ENCODE measurements at regions of chr12 and their contacts with region 1.

Region 1: DNA sequence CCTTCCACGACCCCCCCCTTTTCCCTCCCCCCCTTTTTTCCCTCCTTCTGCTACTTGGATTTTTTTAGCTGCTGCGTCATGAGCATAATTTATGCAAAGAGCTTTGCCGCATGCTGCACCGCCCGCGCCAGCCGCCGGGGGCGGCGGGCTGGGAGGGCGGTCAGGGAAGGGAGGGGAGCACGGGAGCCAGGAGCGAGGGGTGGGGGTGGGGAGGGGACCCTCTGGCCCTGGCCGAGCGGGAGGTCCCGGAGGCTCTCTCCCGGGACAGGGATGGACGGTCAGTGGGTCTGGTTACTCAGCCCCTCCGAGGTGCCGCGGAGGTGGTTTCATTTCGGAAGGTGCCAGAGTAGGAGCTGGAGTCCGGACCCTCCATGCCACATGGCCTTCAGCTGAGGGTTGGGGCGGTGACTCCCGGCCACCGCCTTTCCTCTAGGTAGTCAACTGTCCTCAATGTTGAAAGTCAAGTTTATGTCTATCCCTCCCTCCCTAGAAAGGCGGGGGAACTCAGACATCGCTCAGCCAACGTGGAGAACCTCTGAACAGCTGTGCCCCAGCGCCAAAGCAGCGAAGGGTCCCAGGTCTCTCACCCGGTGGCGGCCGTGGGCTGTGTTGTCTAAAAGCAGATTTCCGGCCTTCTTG is at the start of gene POU6F1:
- DNase-seq: peak; percentile 74 to 86 (median 79)
- ATAC-seq: peak; percentile 81 to 94 (median 92)
- H3K4me3 ChIP-seq: peak within 1 kb of the TSS; percentile 72 to 96 (median 84)
- H3K27ac ChIP-seq: peak within 1 kb of the TSS; percentile 85 to 99 (median 96)
- H3K4me1 ChIP-seq: peaks cover 0 to 27% (median 14%) of the 10 kb centered on the region in 12 donors
- H3K27me3 ChIP-seq: no peaks in the 10 kb centered on the region
- CTCF ChIP-seq: peak in 11 of 12 donors; percentile 36 to 68 (median 60)
- POLR2A ChIP-seq: peak in 1 of 2 donors; percentile 43
- total RNA-seq, gene POU6F1: 4.6 to 14.0 (median 6.8) TPM

Region 2: DNA sequence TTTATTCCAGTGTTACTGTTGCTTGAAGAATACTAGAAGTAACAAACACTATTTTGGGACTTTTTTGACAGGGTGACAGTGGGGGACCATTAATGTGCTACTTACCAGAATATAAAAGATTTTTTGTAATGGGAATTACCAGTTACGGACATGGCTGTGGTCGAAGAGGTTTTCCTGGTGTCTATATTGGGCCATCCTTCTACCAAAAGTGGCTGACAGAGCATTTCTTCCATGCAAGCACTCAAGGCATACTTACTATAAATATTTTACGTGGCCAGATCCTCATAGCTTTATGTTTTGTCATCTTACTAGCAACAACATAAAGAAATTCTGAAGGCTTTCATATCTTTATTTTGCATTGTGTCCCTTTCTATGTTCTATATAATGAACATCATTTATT is 330.9 kb before region 1 on chr12:
- intact Hi-C with region 1: no loop called
- DNase-seq: no peak
- ATAC-seq: no peak
- H3K4me3 ChIP-seq: no peak overlapping the region
- H3K27ac ChIP-seq: no peak overlapping the region
- H3K4me1 ChIP-seq: no peaks in the 10 kb centered on the region
- H3K27me3 ChIP-seq: no peaks in the 10 kb centered on the region
- CTCF ChIP-seq: no peak
- POLR2A ChIP-seq: no peak

Region 3: DNA sequence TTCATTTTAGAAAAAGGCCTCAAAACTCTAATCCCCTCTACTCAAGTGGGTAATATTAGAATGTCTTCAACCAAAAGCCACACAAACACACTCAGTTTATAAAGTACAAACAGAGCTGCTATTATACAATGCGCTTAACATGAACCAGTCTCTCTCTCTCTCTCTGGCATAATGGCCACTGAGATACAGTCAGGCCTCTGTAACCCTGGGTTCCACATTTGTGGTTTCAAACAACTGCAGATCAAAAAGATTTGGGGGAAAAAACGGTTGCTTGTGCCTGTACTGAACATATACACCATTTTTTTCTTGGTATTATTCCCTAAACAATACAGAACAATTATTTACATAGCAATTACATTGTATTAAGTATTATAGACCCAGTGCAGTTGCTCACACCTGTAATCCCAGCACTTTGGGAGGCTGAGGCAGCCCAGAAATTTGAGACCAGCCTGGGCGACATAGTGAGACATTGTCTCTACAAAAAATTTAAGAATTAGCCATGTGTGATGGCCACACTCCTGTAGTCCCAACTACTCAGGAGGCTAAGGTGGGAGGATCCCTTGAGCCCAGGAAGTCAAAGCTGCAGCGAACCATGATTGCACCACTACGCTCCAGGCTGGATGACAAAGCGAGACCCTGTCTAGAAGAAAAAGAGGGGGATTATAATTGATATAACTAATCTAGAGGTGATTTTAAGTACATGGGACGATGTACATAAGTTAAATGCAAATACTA is 197.5 kb before region 1 on chr12:
- intact Hi-C with region 1: no loop called
- DNase-seq: no peak
- ATAC-seq: no peak
- H3K4me3 ChIP-seq: no peak overlapping the region
- H3K27ac ChIP-seq: peak overlapping the region in 1 of 12 donors; percentile 64
- H3K4me1 ChIP-seq: peaks cover 0 to 66% (median 20%) of the 10 kb centered on the region in 12 donors
- H3K27me3 ChIP-seq: no peaks in the 10 kb centered on the region
- CTCF ChIP-seq: no peak
- POLR2A ChIP-seq: no peak

Region 4: GRCh38 chr12:51083126-51083833 is 134.8 kb before region 1 on chr12 and contains the start of gene CSRNP2:
- intact Hi-C with region 1: loop called in 1 of 10 experiments (anchors 2 kb)
- DNase-seq: peak; percentile 97 to 98 (median 97)
- ATAC-seq: peak; percentile 99 to 100 (median 100)
- H3K4me3 ChIP-seq: peak within 1 kb of the TSS; percentile 74 to 99 (median 86)
- H3K27ac ChIP-seq: peak within 1 kb of the TSS; percentile 85 to 97 (median 92)
- H3K4me1 ChIP-seq: peaks cover 0 to 42% (median 18%) of the 10 kb centered on the region in 12 donors
- H3K27me3 ChIP-seq: no peaks in the 10 kb centered on the region
- CTCF ChIP-seq: peak in 4 of 12 donors; percentile 9 to 40 (median 21)
- POLR2A ChIP-seq: peak; percentile 99 to 100
- total RNA-seq, gene CSRNP2: 12.8 to 25.7 (median 18.5) TPM

Region 5: DNA sequence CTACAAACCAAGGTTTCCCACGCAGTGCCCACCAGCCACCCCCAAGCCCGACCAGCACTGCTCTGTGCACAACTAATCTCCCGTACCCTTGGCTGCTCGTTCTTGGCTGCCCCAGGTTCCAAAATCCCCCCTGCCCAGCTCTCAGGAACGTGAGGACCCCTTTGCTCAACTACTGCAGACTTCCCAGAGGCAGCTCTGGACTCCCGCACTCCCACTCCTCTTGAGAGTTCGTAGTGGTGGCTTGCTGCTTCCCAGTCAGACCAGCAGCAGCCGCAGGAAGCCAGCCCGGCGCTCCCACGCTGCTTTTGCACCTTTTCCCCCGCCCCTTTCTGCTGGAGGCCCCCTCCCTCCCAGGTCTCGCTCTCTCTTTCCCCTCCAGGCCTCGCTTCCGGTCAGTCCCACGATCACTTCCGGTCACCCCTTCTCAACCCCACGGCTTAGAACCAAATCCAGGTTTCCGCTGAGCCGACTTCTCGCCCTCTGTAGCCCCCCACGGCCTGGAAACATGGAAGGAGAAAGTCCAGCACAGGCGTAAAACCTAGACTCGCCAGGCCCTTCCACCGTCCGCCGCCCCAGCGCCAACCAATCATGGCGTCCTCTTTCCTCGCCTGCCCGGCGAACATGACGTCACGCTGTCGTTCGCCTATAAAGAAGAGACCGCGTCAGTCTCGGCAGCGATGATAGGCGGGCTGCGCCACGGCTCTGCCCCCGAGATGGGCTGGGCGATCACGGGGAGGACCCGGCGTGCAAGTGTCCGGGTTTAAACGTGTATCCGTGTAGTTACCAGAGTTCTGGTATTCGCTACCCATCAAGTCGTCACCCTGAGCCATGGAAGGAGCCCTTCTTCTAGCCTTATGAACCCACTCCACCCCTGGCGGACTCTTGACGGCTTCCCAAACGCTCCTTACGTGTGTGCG is 45.3 kb before region 1 on chr12 and contains the start of gene TFCP2:
- intact Hi-C with region 1: loop called in 4 of 10 experiments (anchors 1 to 5 kb)
- DNase-seq: peak; percentile 97 to 99 (median 98)
- ATAC-seq: peak; percentile 99
- H3K4me3 ChIP-seq: peak within 1 kb of the TSS; percentile 24 to 88 (median 74)
- H3K27ac ChIP-seq: peak within 1 kb of the TSS; percentile 86 to 98 (median 94)
- H3K4me1 ChIP-seq: peaks cover 0 to 34% (median 16%) of the 10 kb centered on the region in 12 donors
- H3K27me3 ChIP-seq: no peaks in the 10 kb centered on the region
- CTCF ChIP-seq: no peak
- POLR2A ChIP-seq: no peak
- total RNA-seq, gene TFCP2: 10.8 to 28.8 (median 20.7) TPM

Region 6: GRCh38 chr12:51198568-51199365 is 19.3 kb before region 1 on chr12:
- intact Hi-C with region 1: no loop called
- DNase-seq: no peak
- ATAC-seq: no peak
- H3K4me3 ChIP-seq: no peak overlapping the region
- H3K27ac ChIP-seq: no peak overlapping the region
- H3K4me1 ChIP-seq: no peaks in the 10 kb centered on the region
- H3K27me3 ChIP-seq: no peaks in the 10 kb centered on the region
- CTCF ChIP-seq: no peak
- POLR2A ChIP-seq: no peak

Region 7: GRCh38 chr12:51270067-51270970 is 52.2 kb after region 1 on chr12 and contains the start of gene SMAGP:
- intact Hi-C with region 1: loop called in 1 of 10 experiments (anchors 2 kb)
- DNase-seq: peak; percentile 63 to 79 (median 72)
- ATAC-seq: peak; percentile 25 to 91 (median 78)
- H3K4me3 ChIP-seq: peak within 1 kb of the TSS; percentile 55 to 86 (median 72)
- H3K27ac ChIP-seq: peak within 1 kb of the TSS; percentile 6 to 87 (median 80)
- H3K4me1 ChIP-seq: peaks cover 0 to 20% (median 3%) of the 10 kb centered on the region in 12 donors
- H3K27me3 ChIP-seq: peaks cover 0 to 9% (median 0%) of the 10 kb centered on the region in 9 donors
- CTCF ChIP-seq: peak in 5 of 12 donors; percentile 8 to 33 (median 11)
- POLR2A ChIP-seq: no peak
- total RNA-seq, gene SMAGP: 2.0 to 7.4 (median 3.7) TPM

Measured in heart left ventricle (tissue), 16 donors.